ENCODE measurements at regions of chr2 and their contacts with region 1.

Region 1: DNA sequence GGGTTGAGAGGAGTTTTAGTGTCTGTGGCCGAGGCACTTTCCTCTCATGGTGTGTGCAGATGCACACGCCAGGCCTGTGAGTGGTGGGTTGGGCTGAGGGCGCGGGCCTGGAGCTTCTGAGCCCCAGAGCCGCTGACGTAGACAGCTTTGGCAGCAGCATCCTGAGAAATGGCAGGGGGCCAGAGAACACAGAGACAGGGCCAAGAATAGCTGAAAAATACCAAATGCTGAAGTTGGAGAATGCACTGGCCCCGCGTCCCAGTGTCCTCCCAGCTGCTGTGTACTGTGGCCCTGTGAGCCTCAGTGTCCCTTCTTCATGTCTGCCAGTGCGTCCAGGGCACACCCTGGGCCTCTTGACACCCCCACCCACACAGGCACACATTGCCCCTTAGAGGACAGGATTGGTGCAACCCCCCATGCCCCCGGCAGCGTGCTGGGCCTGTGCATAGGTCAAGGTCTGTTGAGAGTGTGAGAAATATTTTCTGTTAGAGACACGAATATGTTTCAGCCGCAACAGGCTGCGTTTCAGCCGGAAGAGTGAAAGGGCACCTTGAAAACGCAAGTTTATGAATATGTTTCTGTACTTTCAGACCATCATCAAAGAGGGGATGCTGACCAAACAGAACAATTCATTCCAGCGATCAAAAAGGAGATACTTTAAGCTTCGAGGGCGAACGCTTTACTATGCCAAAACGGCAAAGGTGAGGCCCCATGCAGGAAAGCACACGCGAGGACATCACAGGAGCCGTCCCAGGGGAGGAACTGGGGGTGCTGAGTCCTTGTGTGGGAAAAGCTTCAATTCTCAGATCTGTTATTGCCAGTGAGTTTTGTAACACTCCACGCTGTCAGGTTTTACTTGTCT is 33.6 kb downstream of the DGKD start:
- DNase-seq: no peak
- ATAC-seq: no peak
- H3K4me3 Mint-ChIP-seq: peak overlapping the region; percentile 77
- H3K27ac Mint-ChIP-seq: no peak overlapping the region
- H3K4me1 Mint-ChIP-seq: peaks cover 42% of the 10 kb centered on the region
- H3K27me3 Mint-ChIP-seq: no peaks in the 10 kb centered on the region

Region 2: DNA sequence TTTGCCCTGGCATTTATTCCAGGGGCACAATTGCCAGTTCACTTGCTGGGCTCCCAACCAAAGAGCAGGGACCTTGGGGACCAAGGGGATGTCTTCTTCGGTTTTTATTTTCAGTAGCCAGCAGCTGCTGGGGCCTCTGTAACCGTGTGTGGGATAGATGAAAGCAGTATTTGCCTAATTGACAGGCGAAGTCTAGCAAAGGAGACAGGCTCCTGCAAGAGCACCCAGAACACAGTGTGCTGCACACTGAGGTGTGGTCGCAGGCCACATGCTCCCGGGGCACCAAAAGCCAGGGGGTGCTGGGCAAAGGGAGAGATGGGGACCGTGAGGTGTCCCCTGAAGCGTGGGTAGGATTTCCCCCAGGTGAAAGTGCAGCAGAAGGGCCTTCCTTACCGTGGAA is 75.0 kb before region 1 on chr2:
- POLR2A ChIA-PET with region 1: no interaction called
- DNase-seq: no peak
- ATAC-seq: no peak
- H3K4me3 Mint-ChIP-seq: no peak overlapping the region
- H3K27ac Mint-ChIP-seq: peak overlapping the region; percentile 19
- H3K4me1 Mint-ChIP-seq: peaks cover 20% of the 10 kb centered on the region
- H3K27me3 Mint-ChIP-seq: no peaks in the 10 kb centered on the region

Region 3: DNA sequence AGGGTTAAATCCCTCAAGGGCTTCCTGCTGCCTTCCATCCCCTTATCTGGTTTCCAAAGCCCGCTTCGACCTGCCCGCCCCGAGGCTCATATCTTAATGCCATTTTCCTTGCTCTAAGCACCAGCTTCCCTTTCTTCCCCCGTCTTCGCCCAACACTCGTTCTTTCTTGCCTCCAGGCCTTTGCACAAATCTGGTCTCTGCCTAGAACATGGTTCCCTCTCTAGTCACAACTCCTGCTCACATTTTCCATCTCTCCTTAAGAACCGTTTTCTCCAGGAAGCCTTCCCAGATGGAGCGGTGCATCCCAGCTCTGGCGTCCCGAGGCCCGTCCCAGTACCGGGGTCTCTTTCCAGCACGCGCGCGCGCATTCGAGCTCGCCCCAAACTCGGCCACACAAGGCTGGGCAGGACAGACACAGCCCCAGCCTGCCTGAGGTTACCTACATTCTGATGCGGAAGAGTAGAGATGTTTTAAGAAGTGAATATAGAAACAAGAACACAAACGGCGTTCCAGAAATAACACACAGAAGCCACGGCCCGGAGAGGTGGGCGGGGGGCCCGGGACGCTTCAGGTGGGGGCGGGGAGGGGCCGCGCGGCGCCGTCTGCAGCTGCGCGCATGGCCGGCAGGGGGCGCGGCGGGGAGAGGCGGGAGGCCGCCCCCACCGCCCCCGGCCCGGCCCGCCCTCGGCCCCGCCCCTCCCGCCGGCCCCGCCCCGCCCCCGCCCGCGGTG is 34.0 kb before region 1 on chr2 and contains the start of gene DGKD:
- POLR2A ChIA-PET with region 1: interaction called, 16 read pairs
- DNase-seq: peak; percentile 87
- ATAC-seq: peak; percentile 65
- H3K4me3 Mint-ChIP-seq: peak within 1 kb of the TSS; percentile 87
- H3K27ac Mint-ChIP-seq: peak within 1 kb of the TSS; percentile 93
- H3K4me1 Mint-ChIP-seq: peaks cover 64% of the 10 kb centered on the region
- H3K27me3 Mint-ChIP-seq: no peaks in the 10 kb centered on the region
- total RNA-seq, gene DGKD: 114 to 132 TPM

Region 4: DNA sequence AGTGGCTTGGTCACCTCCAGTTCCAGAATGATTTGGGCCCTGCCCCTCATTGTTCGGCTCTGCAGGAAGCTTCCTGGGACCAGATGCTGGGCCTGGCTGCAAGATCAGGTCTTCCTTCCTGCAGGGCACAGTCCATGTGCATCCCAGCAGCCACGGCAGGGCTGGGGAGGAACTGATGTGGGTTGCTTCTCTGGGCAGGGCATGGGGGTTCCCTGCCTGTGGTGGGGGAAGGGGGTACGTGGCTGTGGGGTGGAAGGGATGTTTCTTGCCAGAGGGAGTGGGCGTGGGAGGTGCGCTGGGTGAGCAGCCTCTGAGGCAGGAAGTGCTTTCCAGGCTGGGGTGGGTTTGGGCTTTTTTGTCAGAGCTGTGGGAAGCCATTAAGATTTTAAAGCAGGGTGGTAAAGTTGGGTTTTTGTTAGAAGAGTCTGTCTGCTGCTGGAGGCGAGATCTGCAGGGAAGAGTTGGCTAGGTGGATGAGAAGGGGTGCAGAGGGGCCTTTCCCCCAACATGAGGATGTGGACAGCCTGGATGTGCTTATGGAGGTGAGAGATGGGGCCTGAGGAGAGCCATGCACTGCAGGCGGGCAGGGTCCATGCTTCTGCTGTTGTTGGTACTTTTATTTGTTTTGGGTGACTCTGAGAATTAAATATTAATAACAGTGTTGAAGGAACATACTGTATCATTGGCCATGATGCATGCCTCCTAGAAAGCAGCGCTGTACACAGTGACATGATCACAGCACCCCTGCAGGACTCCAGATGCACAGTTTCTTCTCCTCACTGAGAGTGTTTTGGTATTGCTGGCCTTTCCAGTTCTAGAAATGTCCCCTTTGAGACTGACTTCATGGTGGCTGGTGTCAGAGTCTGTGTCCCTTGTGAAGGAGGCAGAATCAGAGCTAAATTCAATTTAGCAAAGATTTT is 11.7 kb after region 1 on chr2:
- POLR2A ChIA-PET with region 1: interaction called, 13 read pairs
- DNase-seq: peak; percentile 62
- ATAC-seq: peak; percentile 55
- H3K4me3 Mint-ChIP-seq: peak overlapping the region; percentile 69
- H3K27ac Mint-ChIP-seq: peak overlapping the region; percentile 92
- H3K4me1 Mint-ChIP-seq: peaks cover 55% of the 10 kb centered on the region
- H3K27me3 Mint-ChIP-seq: no peaks in the 10 kb centered on the region

Region 5: GRCh38 chr2:233418761-233419625 is 31.1 kb after region 1 on chr2:
- POLR2A ChIA-PET with region 1: interaction called, 10 read pairs
- DNase-seq: peak; percentile 51
- ATAC-seq: peak; percentile 37
- H3K4me3 Mint-ChIP-seq: peak overlapping the region; percentile 79
- H3K27ac Mint-ChIP-seq: peak overlapping the region; percentile 78
- H3K4me1 Mint-ChIP-seq: peaks cover 76% of the 10 kb centered on the region
- H3K27me3 Mint-ChIP-seq: no peaks in the 10 kb centered on the region

Region 6: DNA sequence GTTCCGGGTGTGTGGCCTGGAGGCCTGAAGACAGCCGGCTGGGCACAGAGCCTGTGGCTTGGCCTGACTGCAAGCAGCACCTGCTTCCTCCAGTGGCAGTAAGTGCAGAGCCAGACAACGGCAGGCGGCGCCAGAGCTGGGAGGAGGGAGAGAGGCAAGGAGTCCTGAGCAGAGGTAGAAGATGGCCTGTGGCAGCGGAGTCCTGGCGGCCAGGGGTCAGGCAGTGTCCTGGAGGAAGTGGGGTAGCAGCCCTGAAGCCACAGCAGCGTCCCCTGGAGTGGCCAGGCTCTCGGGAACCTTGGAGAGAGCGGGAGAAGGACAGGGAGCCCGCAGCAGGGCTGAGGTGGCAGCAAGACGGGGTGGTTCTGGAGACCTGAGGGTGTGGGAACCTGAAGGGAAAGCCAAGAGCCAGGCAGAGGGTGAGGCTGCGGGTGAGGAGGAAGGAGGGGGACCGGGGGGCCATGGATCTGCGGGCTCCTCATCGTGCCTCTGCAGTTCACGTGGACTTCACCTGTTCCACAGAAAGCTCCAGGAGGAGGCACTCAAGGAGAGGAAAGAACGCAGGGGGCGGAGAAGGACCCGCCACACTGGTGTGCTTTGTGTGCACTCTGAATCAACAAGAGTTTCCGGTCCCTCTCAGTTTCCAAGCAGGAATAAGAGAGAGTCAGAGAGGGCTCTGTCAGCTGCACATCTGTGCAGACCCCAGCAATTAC is 92.7 kb after region 1 on chr2:
- POLR2A ChIA-PET with region 1: no interaction called
- DNase-seq: no peak
- ATAC-seq: no peak
- H3K4me3 Mint-ChIP-seq: no peak overlapping the region
- H3K27ac Mint-ChIP-seq: no peak overlapping the region
- H3K4me1 Mint-ChIP-seq: no peaks in the 10 kb centered on the region
- H3K27me3 Mint-ChIP-seq: no peaks in the 10 kb centered on the region

Measured in activated naive CD8-positive, alpha-beta T cell treated with anti-CD3 and anti-CD28 coated beads, Interleukin-2, amount 10 ng/mL, durations not matched to agents 7 days and 5 days (primary cell).